H1 (cell line): ENCODE measurements at regions of chr11 and their contacts with region 1.

Region 1: DNA sequence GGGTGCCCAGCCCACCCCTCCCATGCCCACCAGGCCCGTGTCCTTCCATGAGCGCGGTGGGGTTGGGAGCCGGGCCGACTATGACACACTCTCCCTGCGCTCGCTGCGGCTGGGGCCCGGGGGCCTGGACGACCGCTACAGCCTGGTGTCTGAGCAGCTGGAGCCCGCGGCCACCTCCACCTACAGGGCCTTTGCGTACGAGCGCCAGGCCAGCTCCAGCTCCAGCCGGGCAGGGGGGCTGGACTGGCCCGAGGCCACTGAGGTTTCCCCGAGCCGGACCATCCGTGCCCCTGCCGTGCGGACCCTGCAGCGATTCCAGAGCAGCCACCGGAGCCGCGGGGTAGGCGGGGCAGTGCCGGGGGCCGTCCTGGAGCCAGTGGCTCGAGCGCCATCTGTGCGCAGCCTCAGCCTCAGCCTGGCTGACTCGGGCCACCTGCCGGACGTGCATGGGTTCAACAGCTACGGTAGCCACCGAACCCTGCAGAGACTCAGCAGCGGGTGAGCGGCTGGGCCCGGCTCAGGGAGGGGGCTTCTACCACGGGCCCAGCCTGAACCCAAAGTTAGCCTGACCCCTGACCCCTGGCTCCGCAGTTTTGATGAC is 3.0 kb downstream of the PKP3 start:
- DNase-seq: no peak
- H3K4me3 ChIP-seq: no peak overlapping the region
- H3K27ac ChIP-seq: no peak overlapping the region
- H3K4me1 ChIP-seq: peaks cover 6 to 15% (median 6%) of the 10 kb centered on the region in 4 experiments; a peak in 6 of 7 replicates
- H3K27me3 ChIP-seq: no peaks in the 10 kb centered on the region
- CTCF ChIP-seq: 0 out of 4 replicates have a peak, but pooled peaks of 1 of the 3 experiments have one; percentile 15
- EP300 ChIP-seq: no peak
- POLR2A ChIP-seq: no peak
- RAD21 ChIP-seq: no peak

Region 2: GRCh38 chr11:326842-327580 is 70.0 kb before region 1 on chr11:
- CTCF ChIA-PET with region 1: no interaction called
- POLR2A ChIA-PET with region 1: no interaction called
- DNase-seq: no peak
- H3K4me3 ChIP-seq: no peak overlapping the region
- H3K27ac ChIP-seq: no peak overlapping the region
- H3K4me1 ChIP-seq: peaks cover 0 to 14% (median 2%) of the 10 kb centered on the region in 4 experiments; a peak in 4 of 7 replicates
- H3K27me3 ChIP-seq: no peaks in the 10 kb centered on the region
- CTCF ChIP-seq: no peak
- EP300 ChIP-seq: no peak
- POLR2A ChIP-seq: no peak
- RAD21 ChIP-seq: no peak

Region 3: DNA sequence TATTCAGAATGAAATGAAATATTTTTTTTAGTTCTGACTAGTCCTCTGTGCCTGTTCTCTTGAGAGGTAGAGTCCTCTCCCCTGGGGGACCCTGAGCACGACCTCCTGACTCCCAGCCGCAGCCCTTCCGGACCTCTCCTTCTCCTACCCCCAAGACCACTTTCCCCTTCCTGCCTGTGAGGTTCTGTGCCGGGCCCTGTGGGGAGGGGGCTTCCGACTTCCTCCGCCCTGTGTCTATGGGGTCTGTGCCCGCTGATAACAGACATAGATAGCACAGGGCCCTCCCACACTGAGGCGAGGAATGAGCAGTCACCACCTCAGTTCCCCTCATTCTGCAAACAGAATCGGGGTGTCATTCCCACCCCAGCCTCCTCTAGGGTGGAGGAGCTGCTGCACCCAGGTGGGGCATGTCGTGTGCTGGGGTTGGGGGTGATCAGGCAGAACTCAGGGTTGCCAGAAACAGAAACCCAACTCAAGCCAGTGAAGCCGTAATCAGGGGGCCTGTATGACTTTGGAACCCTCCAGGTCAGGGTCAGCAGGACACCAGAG is 14.9 kb before region 1 on chr11:
- CTCF ChIA-PET with region 1: interaction called, 11 read pairs
- POLR2A ChIA-PET with region 1: interaction called, 20 read pairs
- DNase-seq: no peak
- H3K4me3 ChIP-seq: no peak overlapping the region
- H3K27ac ChIP-seq: no peak overlapping the region
- H3K4me1 ChIP-seq: no peaks in the 10 kb centered on the region
- H3K27me3 ChIP-seq: no peaks in the 10 kb centered on the region
- CTCF ChIP-seq: no peak
- EP300 ChIP-seq: no peak
- POLR2A ChIP-seq: no peak
- RAD21 ChIP-seq: no peak

Region 4: GRCh38 chr11:406978-407739 is 10.1 kb after region 1 on chr11:
- CTCF ChIA-PET with region 1: interaction called, 11 read pairs
- POLR2A ChIA-PET with region 1: interaction called, 17 read pairs
- DNase-seq: peak; percentile 57 to 88
- H3K4me3 ChIP-seq: peak overlapping the region; percentile 8 to 65 (median 29); a peak in 6 of 8 replicates
- H3K27ac ChIP-seq: no peak overlapping the region
- H3K4me1 ChIP-seq: peaks cover 0 to 11% (median 6%) of the 10 kb centered on the region in 4 experiments; a peak in 4 of 7 replicates
- H3K27me3 ChIP-seq: peaks cover 0 to 5% (median 0%) of the 10 kb centered on the region in 4 experiments; a peak in 2 of 7 replicates
- CTCF ChIP-seq: no peak
- EP300 ChIP-seq: no peak
- POLR2A ChIP-seq: no peak
- RAD21 ChIP-seq: no peak